OCI-LY7 (cell line): ENCODE measurements at regions of chr11 and their contacts with region 1.

Region 1: DNA sequence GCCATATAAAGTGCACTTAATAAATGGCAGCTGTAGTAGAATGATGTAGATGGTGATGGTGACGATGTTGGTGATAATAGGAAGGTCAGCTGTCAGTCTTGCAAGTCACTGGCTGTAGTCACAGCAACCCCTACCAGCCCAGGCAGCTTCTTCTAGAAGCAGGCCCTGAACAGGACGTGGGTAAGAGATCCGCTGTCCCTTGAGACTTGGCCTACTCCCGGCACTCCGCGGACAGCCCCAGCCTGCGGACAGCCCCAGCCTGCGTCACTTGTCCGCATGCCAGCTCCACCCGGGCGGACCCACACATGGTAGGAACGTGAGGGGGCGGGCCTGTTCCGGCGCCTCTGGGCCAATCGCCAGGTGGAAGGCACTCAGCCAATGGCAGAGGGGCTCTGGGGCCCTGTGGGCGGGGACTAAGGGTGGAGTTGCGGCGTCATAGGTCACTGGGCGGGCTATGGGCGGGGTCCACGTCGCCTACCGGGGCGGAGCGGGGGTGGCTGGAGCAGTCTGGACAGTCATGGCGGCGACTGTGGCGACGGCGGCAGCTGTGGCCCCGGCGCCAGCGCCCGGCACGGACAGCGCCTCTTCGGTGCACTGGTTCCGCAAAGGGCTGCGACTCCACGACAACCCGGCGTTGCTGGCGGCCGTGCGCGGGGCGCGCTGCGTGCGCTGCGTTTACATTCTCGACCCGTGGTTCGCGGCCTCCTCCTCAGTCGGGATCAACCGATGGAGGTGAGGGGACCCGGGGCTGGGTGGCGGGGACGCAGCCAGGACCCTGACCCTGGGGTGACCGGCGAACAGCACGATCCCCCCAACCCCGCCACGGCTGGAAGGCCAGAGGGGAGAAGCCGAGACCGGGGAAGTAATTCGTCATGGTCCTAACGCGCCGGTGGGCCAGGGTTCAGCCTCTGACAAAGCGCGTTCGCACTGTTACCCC is at the start of gene CRY2:
- DNase-seq: peak; percentile 99
- H3K4me3 ChIP-seq: peak within 1 kb of the TSS; percentile 94
- H3K27ac ChIP-seq: no peak within 1 kb of the TSS
- H3K4me1 ChIP-seq: peaks cover 44% of the 10 kb centered on the region
- CTCF ChIP-seq: no peak
- total RNA-seq, gene CRY2: 19.2 and 24.5 TPM in 2 replicates

Region 2: DNA sequence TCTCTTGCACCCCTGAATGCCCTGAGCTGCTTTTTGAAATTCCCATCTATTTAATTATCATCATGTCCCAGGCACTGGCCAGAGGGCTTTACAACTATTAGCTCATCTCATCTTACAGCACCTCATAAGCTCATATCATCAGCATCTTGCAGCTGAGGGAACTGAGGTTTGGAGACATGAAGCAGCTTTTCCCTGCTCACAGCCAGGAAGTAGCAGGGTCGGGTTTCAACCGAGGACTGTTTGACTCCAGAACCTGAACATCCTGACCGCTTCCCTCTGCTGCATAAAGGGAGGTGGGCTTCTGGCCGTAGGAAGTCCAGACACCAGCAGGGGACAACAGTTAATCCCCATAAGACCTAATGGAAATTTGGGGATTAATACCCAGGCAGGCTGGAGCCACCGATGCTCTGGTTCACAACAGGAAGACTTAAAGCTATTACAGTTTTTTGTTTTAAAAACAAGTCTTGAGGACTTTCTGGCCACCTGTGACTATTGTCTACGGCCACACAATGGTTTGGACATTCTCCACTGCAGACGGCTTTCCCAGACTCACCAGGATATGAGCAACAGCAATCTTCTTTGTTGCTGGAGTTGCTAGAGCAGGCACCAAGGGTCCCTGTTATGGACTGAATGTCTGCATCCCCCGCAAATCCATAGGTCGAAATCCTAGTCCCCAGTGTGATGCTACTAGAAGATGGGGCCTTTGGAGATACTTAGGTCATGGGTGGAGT is 229.2 kb before region 1 on chr11:
- CTCF ChIA-PET with region 1: no interaction called
- POLR2A ChIA-PET with region 1: no interaction called
- intact Hi-C with region 1: no loop called
- DNase-seq: no peak
- H3K4me3 ChIP-seq: no peak overlapping the region
- H3K27ac ChIP-seq: no peak overlapping the region
- H3K4me1 ChIP-seq: no peaks in the 10 kb centered on the region
- CTCF ChIP-seq: no peak

Region 3: DNA sequence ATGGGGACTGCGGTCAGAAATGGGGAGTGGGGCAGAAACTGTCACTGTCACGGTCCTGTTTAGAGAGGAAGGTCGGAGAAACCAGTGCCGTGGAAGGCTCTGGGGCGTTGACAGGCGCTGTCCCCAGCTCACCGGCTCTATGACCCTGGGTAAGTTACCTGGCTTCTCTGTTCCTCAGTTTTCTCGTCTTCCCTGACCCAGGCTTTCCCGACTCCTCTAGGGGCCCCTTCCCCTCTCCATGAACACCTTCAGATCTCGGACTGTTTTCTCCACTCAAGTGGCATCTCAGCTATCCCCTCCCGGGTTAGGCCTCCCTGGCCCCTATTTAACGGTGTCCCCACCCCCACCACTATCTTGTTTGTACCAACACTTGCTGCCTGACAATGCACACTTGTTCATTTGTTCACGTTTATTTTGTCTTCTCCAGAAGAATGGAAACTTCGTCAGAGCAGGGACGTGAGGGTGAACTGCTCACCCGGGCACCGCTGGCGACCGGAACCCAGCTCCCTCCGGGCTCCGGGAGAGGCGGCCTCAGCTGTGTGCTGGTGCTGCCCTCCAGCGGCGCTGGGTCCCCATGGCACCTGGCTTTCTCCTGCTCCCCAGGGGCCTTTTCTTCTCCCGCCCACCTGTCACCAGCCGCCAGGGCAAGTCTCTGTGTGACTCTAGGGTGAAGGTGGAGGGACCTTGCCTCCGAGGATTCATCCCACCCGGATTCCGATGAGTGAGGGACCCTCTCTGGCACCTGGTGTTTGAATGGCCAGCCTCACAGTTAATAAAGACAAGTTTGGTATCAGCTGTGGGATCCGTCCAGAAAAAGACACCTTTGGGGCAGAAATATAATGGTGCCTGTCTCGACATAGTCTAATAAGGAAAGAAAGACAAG is 75.4 kb before region 1 on chr11:
- CTCF ChIA-PET with region 1: interaction called, 3 read pairs
- POLR2A ChIA-PET with region 1: no interaction called
- intact Hi-C with region 1: loop called (anchors 5 kb)
- DNase-seq: peak; percentile 82
- H3K4me3 ChIP-seq: peak overlapping the region; percentile 62
- H3K27ac ChIP-seq: no peak overlapping the region
- H3K4me1 ChIP-seq: peaks cover 21% of the 10 kb centered on the region
- CTCF ChIP-seq: peak; percentile 93

Region 4: GRCh38 chr11:45804761-45805304 is 42.4 kb before region 1 on chr11 and contains the start of gene SLC35C1:
- CTCF ChIA-PET with region 1: no interaction called
- POLR2A ChIA-PET with region 1: interaction called, 3 read pairs
- intact Hi-C with region 1: loop called (anchors 2 kb)
- DNase-seq: peak; percentile 97
- H3K4me3 ChIP-seq: peak within 1 kb of the TSS; percentile 79
- H3K27ac ChIP-seq: no peak within 1 kb of the TSS
- H3K4me1 ChIP-seq: peaks cover 27% of the 10 kb centered on the region
- CTCF ChIP-seq: no peak
- total RNA-seq, gene SLC35C1: 2.1 and 3.3 TPM in 2 replicates

Region 5: DNA sequence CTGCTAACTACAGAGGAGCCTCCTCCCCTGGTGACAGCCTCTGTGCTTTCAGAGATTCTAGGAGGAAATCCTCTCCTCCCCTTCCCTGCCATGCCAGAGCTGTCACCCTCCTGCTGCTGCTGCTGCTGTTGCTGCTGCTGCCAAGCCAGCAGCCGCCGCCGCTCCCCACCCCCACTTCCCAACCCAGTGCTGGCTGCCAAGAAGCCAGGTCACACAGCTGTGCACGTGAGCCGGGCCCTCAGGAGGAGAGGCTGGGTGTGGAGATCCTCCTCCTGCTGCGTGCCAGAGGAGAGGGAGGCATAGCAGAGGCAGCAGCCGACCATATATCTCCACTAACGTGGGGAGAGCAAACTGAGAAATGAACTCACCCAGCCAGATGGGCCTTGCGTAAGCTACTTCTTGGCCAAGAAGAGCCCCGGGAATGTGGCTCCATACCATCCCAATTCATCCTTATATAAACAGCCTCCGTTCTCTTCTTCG is 12.5 kb after region 1 on chr11:
- CTCF ChIA-PET with region 1: interaction called, 4 read pairs
- POLR2A ChIA-PET with region 1: interaction called, 13 read pairs
- intact Hi-C with region 1: no loop called
- DNase-seq: no peak
- H3K4me3 ChIP-seq: no peak overlapping the region
- H3K27ac ChIP-seq: no peak overlapping the region
- H3K4me1 ChIP-seq: no peaks in the 10 kb centered on the region
- CTCF ChIP-seq: no peak

Region 6: DNA sequence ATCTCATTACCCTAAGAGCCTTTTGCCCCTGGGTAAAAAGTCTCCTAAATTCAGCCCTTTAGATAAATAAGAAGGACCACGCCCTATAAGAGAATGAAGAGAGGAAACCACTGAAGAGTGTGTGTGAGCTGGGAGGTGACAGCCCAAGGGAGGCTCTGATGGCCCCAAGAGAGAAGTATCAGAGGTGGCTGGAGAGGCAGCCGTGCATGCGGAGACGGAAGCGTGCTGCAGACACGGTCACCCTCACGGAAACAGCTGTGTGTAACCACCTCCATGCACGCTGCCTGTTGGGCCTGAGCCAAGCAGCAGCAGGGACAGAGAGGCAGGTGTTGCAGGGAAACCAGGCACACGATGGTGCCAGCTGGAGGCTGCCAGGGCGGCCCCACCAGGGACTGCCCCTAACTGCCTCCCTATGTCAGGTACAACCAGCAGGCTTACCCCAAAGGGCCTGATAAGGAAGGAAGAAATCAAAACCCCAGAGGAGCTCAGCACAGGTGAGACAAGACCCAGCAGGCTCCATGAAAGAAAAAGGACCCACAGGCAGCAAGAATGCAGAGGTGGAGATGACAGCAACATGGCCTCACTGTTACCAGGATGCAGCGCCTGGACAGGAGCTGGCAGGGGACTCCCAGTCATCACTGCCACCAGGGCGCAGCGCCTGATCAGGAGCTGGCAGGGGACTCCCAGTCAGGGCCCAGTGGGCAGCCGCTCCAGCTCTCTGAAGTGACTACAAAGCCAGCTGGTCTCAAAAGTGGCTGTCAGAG is 83.0 kb after region 1 on chr11:
- CTCF ChIA-PET with region 1: interaction called, 10 read pairs
- POLR2A ChIA-PET with region 1: interaction called, 3 read pairs
- intact Hi-C with region 1: loop called (anchors 1 kb)
- DNase-seq: peak; percentile 96
- H3K4me3 ChIP-seq: peak overlapping the region; percentile 72
- H3K27ac ChIP-seq: peak overlapping the region; percentile 95
- H3K4me1 ChIP-seq: peaks cover 63% of the 10 kb centered on the region
- CTCF ChIP-seq: no peak

Region 7: GRCh38 chr11:46006418-46007070 is 159.3 kb after region 1 on chr11:
- CTCF ChIA-PET with region 1: interaction called, 7 read pairs
- POLR2A ChIA-PET with region 1: interaction called, 3 read pairs
- intact Hi-C with region 1: loop called (anchors 1 kb)
- DNase-seq: peak; percentile 83
- H3K4me3 ChIP-seq: no peak overlapping the region
- H3K27ac ChIP-seq: no peak overlapping the region
- H3K4me1 ChIP-seq: no peaks in the 10 kb centered on the region
- CTCF ChIP-seq: peak; percentile 98

Region 8: GRCh38 chr11:46050003-46050461 is 202.8 kb after region 1 on chr11:
- CTCF ChIA-PET with region 1: no interaction called
- POLR2A ChIA-PET with region 1: no interaction called
- intact Hi-C with region 1: no loop called
- DNase-seq: no peak
- H3K4me3 ChIP-seq: no peak overlapping the region
- H3K27ac ChIP-seq: no peak overlapping the region
- H3K4me1 ChIP-seq: no peaks in the 10 kb centered on the region
- CTCF ChIP-seq: no peak

Region 9: GRCh38 chr11:46083972-46084371 is 236.7 kb after region 1 on chr11:
- CTCF ChIA-PET with region 1: no interaction called
- POLR2A ChIA-PET with region 1: no interaction called
- intact Hi-C with region 1: no loop called
- DNase-seq: no peak
- H3K4me3 ChIP-seq: no peak overlapping the region
- H3K27ac ChIP-seq: no peak overlapping the region
- H3K4me1 ChIP-seq: no peaks in the 10 kb centered on the region
- CTCF ChIP-seq: no peak

Region 10: DNA sequence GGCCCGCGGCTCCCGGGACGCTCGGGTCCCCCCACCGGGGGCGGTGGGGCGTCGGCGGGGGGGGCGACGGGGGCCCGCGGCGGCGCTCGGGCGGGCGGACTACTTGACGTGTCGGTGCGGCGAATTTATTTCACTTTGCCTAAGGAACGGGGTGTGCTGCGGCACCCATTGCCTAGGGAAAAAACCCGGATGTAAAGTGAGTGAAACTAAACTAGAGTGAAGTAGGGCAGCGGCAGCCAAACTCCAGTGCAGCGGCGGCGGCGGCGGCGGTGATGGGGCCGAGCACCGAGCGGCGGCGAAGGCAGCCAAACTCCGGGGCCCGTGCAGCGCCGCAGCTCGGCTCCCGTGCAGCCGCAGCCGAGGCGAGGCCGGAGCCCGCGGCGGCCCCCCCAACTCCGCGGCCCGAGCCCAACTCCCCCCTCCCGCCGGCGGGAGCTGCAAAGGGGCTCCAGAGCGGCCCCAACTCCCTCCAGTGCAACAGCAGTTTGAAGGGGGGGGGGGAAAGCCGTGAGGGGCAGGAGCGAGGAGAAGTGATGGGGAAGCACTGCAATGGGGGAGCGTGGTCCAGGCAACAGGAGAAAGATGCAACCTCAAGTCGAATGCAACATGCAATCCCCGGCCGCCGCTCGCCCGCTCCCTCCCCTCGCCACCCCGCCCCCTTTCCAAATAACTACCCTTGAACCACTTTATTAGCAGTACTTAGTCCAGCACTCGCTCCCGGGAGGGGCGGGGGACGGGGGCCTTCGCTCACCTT is 274.7 kb after region 1 on chr11:
- CTCF ChIA-PET with region 1: no interaction called
- POLR2A ChIA-PET with region 1: interaction called, 3 read pairs
- intact Hi-C with region 1: loop called (anchors 5 kb)
- DNase-seq: peak; percentile 95
- H3K4me3 ChIP-seq: peak overlapping the region; percentile 79
- H3K27ac ChIP-seq: peak overlapping the region; percentile 85
- H3K4me1 ChIP-seq: peaks cover 31% of the 10 kb centered on the region
- CTCF ChIP-seq: no peak